ENCODE measurements at regions of chr4 and their contacts with region 1.

Region 1: DNA sequence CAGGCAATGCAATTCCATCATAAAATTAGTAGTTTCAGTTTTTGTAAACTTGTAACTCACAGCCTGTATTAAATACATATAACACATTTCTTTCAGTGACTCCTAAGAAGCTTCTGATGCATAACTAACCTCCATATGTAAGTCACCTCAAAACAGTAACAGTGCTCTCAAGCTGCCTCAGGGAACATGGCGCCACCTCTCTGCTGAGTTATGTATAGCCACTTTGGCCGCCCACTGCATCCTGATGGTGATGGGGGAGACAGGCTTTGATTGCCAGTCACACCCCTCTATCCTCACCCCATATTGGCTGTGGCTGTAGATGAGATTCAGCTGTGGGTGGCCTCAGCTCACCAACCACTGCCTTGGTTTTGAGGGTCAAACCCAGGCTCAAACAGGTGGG is 54.3 kb downstream of the LRBA start:
- DNase-seq: no peak
- H3K4me3 ChIP-seq: no peak overlapping the region
- H3K27me3 ChIP-seq: no peaks in the 10 kb centered on the region
- CTCF ChIP-seq: peak; percentile 70

Region 2: DNA sequence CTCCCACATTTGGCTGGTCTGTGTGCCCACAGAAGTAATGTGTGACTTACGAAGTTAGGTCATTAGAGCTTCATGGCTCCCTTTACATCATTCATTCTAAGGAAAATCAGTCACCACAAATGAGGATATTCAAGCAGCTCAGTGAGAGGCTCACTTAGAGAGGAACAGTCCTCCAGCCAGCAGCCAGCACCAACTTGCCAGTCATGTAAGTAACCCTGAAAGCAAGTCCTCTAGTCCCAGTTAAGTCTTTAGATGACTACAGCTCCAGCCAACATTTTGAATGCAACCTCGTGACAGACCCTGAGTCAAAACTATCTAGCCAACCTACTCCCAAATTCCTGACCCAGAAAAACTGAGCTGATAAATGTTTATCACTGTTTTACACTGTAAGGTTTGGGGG is 17.0 kb before region 1 on chr4:
- CTCF ChIA-PET with region 1: interaction called, 17 read pairs
- POLR2A ChIA-PET with region 1: no interaction called
- DNase-seq: no peak
- H3K4me3 ChIP-seq: no peak overlapping the region
- H3K27me3 ChIP-seq: no peaks in the 10 kb centered on the region
- CTCF ChIP-seq: no peak

Region 3: DNA sequence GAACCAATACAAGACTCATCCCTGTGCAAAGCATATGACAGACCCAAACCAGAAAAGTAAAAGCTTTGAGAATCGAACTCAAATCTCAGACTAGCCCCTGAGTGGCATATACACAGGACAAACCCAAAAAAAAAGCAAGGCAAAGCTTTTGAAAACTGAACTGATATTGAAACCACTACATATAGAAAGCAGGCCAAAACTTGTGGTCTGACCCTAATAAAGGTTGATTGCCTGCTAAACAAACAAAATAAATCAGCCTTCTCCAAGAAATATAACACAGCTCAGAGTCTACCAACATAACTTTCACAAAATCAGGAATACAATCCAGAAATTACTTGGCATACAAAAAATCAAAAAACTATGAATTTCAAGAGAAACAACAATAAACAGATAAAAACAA is 13.9 kb after region 1 on chr4:
- CTCF ChIA-PET with region 1: interaction called, 20 read pairs
- POLR2A ChIA-PET with region 1: no interaction called
- DNase-seq: no peak
- H3K4me3 ChIP-seq: no peak overlapping the region
- H3K27me3 ChIP-seq: no peaks in the 10 kb centered on the region
- CTCF ChIP-seq: no peak